Adrenal gland (tissue), 19 donors: ENCODE measurements at regions of chr15 and their contacts with region 1.

Region 1: GRCh38 chr15:68316061-68316804 is 38.7 kb downstream of the FEM1B start:
- DNase-seq: peak in 4 of 7 donors; percentile 1 to 42 (median 12)
- H3K4me3 ChIP-seq: no peak overlapping the region
- H3K27ac ChIP-seq: no peak overlapping the region
- H3K4me1 ChIP-seq: no peaks in the 10 kb centered on the region
- H3K27me3 ChIP-seq: no peaks in the 10 kb centered on the region
- CTCF ChIP-seq: no peak
- POLR2A ChIP-seq: no peak

Region 2: GRCh38 chr15:68073576-68074288 is 242.5 kb before region 1 on chr15:
- intact Hi-C with region 1: no loop called
- DNase-seq: no peak
- H3K4me3 ChIP-seq: no peak overlapping the region
- H3K27ac ChIP-seq: no peak overlapping the region
- H3K4me1 ChIP-seq: peaks cover 11 to 45% of the 10 kb centered on the region in 2 donors
- H3K27me3 ChIP-seq: no peaks in the 10 kb centered on the region
- CTCF ChIP-seq: no peak
- POLR2A ChIP-seq: no peak

Region 3: GRCh38 chr15:68360721-68361120 is 44.5 kb after region 1 on chr15:
- intact Hi-C with region 1: no loop called
- DNase-seq: no peak
- H3K4me3 ChIP-seq: no peak overlapping the region
- H3K27ac ChIP-seq: no peak overlapping the region
- H3K4me1 ChIP-seq: peaks cover 0 to 6% of the 10 kb centered on the region in 2 donors
- H3K27me3 ChIP-seq: no peaks in the 10 kb centered on the region
- CTCF ChIP-seq: no peak
- POLR2A ChIP-seq: no peak

Region 4: GRCh38 chr15:68372291-68372811 is 56.1 kb after region 1 on chr15:
- intact Hi-C with region 1: loop called (anchors 5 kb)
- DNase-seq: peak in 5 of 7 donors; percentile 16 to 58 (median 49)
- H3K4me3 ChIP-seq: no peak overlapping the region
- H3K27ac ChIP-seq: no peak overlapping the region
- H3K4me1 ChIP-seq: peaks cover 5 to 11% of the 10 kb centered on the region in 2 donors
- H3K27me3 ChIP-seq: no peaks in the 10 kb centered on the region
- CTCF ChIP-seq: peak; percentile 22 to 47 (median 36)
- POLR2A ChIP-seq: no peak

Region 5: GRCh38 chr15:68383161-68384074 is 67.2 kb after region 1 on chr15:
- intact Hi-C with region 1: loop called in 1 of 2 experiments (anchors 5 kb)
- DNase-seq: peak in 4 of 7 donors; percentile 27 to 66 (median 60)
- H3K4me3 ChIP-seq: no peak overlapping the region
- H3K27ac ChIP-seq: peak overlapping the region in 2 of 5 donors; percentile 74 to 82
- H3K4me1 ChIP-seq: peaks cover 7 to 19% of the 10 kb centered on the region in 2 donors
- H3K27me3 ChIP-seq: no peaks in the 10 kb centered on the region
- CTCF ChIP-seq: peak; percentile 61 to 79 (median 72)
- POLR2A ChIP-seq: no peak

Region 6: DNA sequence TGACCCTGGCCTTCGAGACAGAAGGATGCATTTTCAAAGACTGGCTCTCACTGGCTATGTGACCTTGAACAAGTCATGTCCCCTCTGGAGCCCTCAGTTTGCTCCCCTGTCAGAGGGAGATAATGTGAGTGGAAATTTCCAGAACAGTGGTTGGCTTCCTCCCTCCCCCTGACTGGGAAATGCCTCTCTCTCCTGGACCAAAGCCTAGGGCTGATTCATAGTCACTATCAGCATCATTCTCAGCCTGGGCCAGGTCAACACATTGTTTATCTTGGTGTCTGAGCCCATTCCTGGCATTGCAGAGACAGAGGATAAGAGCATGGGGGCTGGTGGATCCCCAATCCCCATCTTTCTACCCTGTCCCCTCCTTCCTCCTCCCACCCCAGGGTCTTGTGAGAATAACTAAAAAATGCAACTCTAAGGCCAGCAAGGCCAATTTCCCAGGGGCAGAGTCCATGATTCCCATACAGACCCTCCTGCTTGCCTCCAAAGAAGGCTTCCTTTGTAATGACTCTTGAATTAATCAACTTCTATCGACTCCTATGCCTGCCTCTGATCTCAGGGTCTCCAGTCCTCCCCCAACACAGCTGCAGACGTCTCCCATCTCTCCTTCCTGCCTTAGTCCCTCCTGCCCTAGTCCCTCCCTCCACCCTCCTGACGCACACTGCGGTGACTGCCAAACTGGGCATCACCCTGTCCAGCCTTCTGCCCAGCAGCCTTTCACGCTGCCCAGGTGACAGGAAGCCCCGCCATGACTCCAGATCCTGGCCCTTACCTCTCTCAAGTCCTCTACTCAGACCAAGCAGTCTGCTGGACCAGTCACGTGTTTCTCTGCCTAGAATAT is 227.2 kb after region 1 on chr15:
- intact Hi-C with region 1: loop called in 1 of 2 experiments (anchors 10 kb)
- DNase-seq: peak; percentile 84 to 94 (median 93)
- H3K4me3 ChIP-seq: no peak overlapping the region
- H3K27ac ChIP-seq: peak overlapping the region; percentile 52 to 86 (median 71)
- H3K4me1 ChIP-seq: peaks cover 14% of the 10 kb centered on the region in 2 donors
- H3K27me3 ChIP-seq: no peaks in the 10 kb centered on the region
- CTCF ChIP-seq: no peak
- POLR2A ChIP-seq: no peak